PC-9 (cell line): ENCODE measurements at regions of chr1 and their contacts with region 1.

Region 1: DNA sequence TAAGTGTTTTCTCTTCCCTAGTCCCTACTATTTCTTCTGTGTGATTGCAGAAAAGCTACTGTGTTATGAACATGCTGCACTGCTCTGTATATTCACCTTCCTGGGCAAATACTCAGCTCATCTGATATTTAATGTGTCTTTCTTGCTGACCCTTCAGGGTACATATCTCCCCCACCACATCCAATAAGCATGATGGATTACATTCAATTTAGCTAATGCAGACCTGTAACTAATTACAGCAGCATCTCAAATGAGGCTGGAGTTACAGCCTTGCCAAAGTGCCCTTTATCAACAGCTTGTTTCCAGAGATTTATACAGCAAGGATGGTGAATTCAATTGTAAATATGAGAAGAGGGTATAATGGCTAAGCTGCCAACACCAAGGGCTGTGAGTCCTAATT is 144.0 kb downstream of the KCNH1 start:
- DNase-seq: no peak
- H3K4me3 ChIP-seq: no peak overlapping the region
- H3K27ac ChIP-seq: no peak overlapping the region
- H3K4me1 ChIP-seq: no peaks in the 10 kb centered on the region
- H3K27me3 ChIP-seq: no peaks in the 10 kb centered on the region
- CTCF ChIP-seq: no peak

Region 2: DNA sequence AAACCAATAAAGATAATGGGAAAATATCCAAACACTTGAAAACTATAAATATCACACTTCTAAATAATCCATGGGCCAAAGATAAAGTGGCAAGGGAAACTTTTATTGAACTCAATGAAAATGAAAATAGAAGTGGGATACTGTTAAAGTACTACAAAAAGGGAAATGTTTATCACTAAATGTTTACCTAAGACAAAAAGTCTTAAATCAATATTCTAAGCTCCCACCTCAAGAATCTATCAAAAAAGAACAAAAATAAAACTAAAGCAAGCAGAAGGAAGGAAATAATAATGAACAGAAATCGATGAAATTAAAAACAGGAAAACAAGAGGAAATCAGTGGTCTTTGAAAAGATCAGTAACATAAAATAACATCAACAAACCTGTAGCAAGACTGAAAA is 38.3 kb after region 1 on chr1:
- CTCF ChIA-PET with region 1: no interaction called
- POLR2A ChIA-PET with region 1: no interaction called
- intact Hi-C with region 1: loop called (anchors 1 kb)
- DNase-seq: no peak
- H3K4me3 ChIP-seq: no peak overlapping the region
- H3K27ac ChIP-seq: no peak overlapping the region
- H3K4me1 ChIP-seq: no peaks in the 10 kb centered on the region
- H3K27me3 ChIP-seq: no peaks in the 10 kb centered on the region
- CTCF ChIP-seq: no peak